Left colon (tissue), 2 donors: ENCODE measurements at regions of chr20 and their contacts with region 1.

Region 1: DNA sequence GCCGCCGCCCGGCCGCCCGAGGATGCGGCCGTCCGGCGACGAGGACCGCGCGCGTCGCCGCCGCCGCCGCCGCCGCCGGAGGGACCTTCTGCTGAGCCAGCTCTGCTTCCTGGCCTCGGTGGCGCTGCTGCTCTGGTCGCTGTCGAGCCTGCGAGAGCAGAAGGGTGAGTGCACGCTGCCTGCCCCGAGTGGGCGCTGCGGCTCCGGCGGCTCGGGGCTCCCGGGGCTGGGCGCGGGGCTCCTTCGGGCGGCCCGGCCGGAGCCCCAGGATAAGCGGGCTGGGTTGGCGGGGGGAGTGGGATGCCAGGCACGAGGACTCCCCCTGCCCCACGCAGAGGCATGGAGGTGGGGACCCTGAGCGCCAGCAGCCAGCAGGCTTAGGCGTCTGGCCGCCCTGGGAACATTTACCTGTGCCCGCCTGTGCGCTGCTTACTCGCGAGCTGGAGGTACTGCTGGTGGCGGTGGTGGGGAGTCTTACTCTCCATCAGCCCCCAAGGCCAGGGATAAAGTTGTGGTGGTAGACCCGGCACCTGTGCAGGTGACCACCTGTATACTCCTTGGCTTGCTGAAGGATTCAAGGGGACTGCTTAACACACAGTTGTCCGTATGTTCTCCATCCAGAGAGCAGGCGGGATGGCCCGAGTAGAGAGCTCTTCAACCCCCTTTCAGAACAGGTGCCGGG is 520 bp downstream of the SLC24A3 start:
- DNase-seq: peak; percentile 75 to 78
- ATAC-seq: peak; percentile 88

Region 2: GRCh38 chr20:19451923-19452295 is 238.9 kb after region 1 on chr20:
- intact Hi-C with region 1: loop called in 1 of 2 experiments (anchors 10 kb)
- DNase-seq: no peak
- ATAC-seq: no peak